Vagina (tissue), 2 donors: ENCODE measurements at regions of chr1 and their contacts with region 1.

Region 1: GRCh38 chr1:219566951-219567947 is 45.7 kb downstream of the ZC3H11B start:
- DNase-seq: no peak
- H3K4me3 ChIP-seq: no peak overlapping the region
- H3K27ac ChIP-seq: no peak overlapping the region
- H3K4me1 ChIP-seq: no peaks in the 10 kb centered on the region
- H3K27me3 ChIP-seq: no peaks in the 10 kb centered on the region
- CTCF ChIP-seq: peak; percentile 13 to 55 (median 49)
- POLR2A ChIP-seq: no peak

Region 2: DNA sequence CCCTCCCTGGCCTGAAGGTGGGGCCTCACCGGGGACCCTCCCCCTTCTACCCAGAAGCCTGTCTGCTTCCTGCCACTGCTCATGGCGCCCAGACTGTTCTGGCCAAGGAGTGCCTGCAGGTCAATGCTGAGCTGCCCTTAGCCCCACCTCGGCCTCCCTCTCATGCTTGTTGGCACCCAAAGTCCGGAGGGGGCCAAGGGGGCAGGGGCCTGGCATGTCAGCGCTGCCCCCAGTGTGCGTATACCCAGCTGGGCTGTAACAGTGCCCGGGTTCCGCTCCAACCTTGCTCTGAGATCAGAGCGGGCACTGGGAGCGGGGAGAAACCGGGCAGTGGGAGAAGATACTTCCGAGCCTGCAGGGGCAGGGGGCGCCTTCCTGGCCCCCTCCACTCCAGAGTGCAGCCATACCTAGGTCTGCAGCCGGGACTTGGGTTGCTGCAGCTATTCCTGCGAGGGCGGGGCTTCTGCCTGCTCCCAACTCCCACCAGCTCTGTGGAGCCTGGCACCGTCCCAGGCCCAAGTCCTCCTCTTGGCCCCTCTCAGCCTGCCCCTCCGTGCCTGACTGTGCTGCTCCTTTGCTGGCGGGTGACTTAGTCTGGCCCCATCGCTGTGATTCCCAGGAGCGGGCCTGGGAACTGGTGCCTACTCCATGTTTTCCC is 1243.6 kb before region 1 on chr1:
- intact Hi-C with region 1: loop called (anchors 10 kb)
- DNase-seq: no peak
- H3K4me3 ChIP-seq: no peak overlapping the region
- H3K27ac ChIP-seq: no peak overlapping the region
- H3K4me1 ChIP-seq: no peaks in the 10 kb centered on the region
- H3K27me3 ChIP-seq: no peaks in the 10 kb centered on the region
- CTCF ChIP-seq: no peak
- POLR2A ChIP-seq: no peak